ENCODE measurements at regions of chr3 and their contacts with region 1.

Region 1: DNA sequence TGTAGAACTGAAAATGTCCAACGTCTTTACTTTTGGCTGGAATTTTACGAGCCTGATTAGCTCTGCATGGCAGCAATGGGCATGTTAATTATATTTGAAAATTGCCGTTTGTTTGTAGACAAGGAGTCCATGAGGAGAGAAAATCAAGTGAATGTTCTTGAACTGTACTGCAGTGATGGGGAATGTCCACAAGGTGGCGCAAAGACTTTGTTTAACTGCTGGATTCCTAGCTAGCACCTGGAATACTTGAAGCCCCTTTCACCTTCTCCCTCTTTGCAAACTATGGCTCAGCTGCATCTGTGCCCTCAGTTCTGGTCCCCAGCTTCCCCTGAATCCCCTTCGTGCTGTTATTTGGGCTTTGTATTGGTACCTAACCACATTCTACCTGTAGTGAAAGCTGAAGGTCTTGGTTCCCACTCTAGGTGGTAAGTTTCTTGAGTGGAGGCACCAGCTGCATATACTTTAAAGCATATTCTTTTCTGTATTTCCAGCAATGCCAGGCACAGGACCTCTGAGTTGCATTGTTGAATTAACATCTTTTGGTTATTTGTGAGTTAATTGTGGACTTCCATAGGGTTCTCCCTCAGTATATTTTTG is 25.3 kb downstream of the EXOG start:
- DNase-seq: peak; percentile 69
- H3K4me3 ChIP-seq: no peak overlapping the region
- H3K27ac ChIP-seq: no peak overlapping the region
- H3K4me1 ChIP-seq: no peaks in the 10 kb centered on the region
- H3K27me3 ChIP-seq: no peaks in the 10 kb centered on the region
- CTCF ChIP-seq: peak; percentile 88

Region 2: DNA sequence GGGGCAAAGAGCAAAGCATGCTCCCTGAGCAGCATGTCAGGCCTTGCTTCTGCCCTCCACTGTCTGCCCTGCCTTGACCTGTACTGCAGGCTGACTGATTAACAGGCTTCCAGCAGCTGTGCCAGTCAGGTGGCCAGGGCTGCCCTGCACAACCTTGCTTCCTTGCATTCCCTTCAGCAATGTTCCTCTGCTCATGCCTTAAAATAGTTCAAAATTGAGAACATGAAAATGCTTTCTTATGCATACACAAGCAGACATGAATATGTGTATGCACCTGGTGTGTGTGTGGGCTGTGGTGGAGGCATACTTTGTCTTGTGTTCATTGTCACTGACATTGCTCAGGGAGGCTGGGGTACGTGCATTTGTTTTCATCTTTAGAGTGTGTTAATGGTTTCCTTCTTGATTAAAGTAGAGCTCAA is 257.1 kb before region 1 on chr3:
- intact Hi-C with region 1: no loop called
- DNase-seq: no peak
- H3K4me3 ChIP-seq: no peak overlapping the region
- H3K27ac ChIP-seq: no peak overlapping the region
- H3K4me1 ChIP-seq: no peaks in the 10 kb centered on the region
- H3K27me3 ChIP-seq: no peaks in the 10 kb centered on the region
- CTCF ChIP-seq: no peak

Region 3: GRCh38 chr3:38655708-38656300 is 134.3 kb after region 1 on chr3:
- intact Hi-C with region 1: loop called (anchors 5 kb)
- DNase-seq: no peak
- H3K4me3 ChIP-seq: no peak overlapping the region
- H3K27ac ChIP-seq: no peak overlapping the region
- H3K4me1 ChIP-seq: no peaks in the 10 kb centered on the region
- H3K27me3 ChIP-seq: no peaks in the 10 kb centered on the region
- CTCF ChIP-seq: peak; percentile 48